ENCODE measurements at regions of chr3 and their contacts with region 1.

Region 1: DNA sequence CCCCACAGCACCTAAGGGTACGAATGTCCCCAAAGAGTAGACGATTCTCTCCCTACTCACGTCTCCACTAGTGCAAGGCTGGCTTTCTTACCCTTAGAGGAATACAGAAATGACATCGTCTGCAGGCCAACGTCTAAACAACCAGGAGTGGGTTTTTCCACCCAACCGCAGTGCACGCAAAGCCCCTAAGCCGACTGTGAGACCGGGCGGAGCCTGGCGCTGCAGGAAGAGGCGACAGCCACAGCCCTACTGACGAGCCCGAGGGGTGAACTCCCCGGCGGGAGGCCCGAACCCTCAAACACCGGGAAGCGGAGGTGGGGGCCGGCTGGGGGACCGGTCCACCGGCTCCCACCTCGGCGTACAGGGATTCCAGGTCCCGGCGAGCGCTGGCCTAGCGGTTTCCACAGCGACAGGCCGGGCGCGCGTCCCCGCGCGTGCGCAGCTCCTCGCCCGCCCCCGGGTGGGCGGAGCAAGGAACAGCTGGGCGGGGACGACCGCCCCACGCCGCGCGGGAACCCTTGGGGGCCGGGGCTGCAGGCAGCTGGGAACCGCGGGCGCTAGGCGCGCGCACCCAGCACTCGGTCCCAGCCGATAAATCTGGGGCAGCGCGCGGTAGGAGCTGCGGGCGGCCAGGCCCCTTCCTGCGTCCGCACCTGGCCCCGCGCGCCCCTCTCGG is at the starts of genes CEP19 and PIGX:
- DNase-seq: peak; percentile 87
- H3K4me3 ChIP-seq: peak within 1 kb of the TSS; percentile 86
- H3K27ac ChIP-seq: peak within 1 kb of the TSS; percentile 51
- H3K4me1 ChIP-seq: peaks cover 13% of the 10 kb centered on the region
- CTCF ChIP-seq: no peak
- total RNA-seq, gene CEP19: 1.9 and 3.3 TPM in 2 replicates
- total RNA-seq, gene PIGX: 24.1 and 24.9 TPM in 2 replicates

Region 2: DNA sequence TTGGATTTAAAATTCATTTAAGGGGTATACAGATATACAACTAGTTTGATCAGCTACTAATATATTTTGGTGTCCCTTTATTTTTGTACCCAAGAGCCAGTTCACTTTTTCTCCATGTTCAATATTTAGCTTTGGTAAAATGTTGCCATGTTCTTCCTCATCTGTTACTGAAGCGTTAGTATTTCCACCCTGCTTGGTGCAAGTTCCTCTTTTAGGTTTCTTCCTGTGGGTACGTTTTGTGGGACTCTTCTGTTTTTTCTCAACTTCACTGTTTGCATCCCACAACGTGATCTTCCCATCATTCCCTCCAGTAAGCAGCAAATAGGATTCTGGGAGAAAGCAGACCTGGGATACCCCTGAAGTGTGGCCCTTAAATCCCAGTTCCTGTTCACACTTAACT is 157.8 kb before region 1 on chr3:
- CTCF ChIA-PET with region 1: no interaction called
- POLR2A ChIA-PET with region 1: interaction called, 12 read pairs
- intact Hi-C with region 1: no loop called
- DNase-seq: peak; percentile 16
- H3K4me3 ChIP-seq: no peak overlapping the region
- H3K27ac ChIP-seq: no peak overlapping the region
- H3K4me1 ChIP-seq: peaks cover 4% of the 10 kb centered on the region
- CTCF ChIP-seq: no peak

Region 3: GRCh38 chr3:196677353-196677752 is 34.6 kb before region 1 on chr3:
- CTCF ChIA-PET with region 1: no interaction called
- POLR2A ChIA-PET with region 1: no interaction called
- intact Hi-C with region 1: no loop called
- DNase-seq: no peak
- H3K4me3 ChIP-seq: no peak overlapping the region
- H3K27ac ChIP-seq: no peak overlapping the region
- H3K4me1 ChIP-seq: no peaks in the 10 kb centered on the region
- CTCF ChIP-seq: no peak

Region 4: GRCh38 chr3:196739671-196740480 is 27.9 kb after region 1 on chr3 and contains the start of gene PAK2:
- CTCF ChIA-PET with region 1: no interaction called
- POLR2A ChIA-PET with region 1: interaction called, 5 read pairs
- intact Hi-C with region 1: loop called (anchors 2 kb)
- DNase-seq: peak; percentile 93
- H3K4me3 ChIP-seq: peak within 1 kb of the TSS; percentile 95
- H3K27ac ChIP-seq: peak within 1 kb of the TSS; percentile 85
- H3K4me1 ChIP-seq: peaks cover 11% of the 10 kb centered on the region
- CTCF ChIP-seq: no peak
- total RNA-seq, gene PAK2: 24.5 and 37.9 TPM in 2 replicates

Region 5: DNA sequence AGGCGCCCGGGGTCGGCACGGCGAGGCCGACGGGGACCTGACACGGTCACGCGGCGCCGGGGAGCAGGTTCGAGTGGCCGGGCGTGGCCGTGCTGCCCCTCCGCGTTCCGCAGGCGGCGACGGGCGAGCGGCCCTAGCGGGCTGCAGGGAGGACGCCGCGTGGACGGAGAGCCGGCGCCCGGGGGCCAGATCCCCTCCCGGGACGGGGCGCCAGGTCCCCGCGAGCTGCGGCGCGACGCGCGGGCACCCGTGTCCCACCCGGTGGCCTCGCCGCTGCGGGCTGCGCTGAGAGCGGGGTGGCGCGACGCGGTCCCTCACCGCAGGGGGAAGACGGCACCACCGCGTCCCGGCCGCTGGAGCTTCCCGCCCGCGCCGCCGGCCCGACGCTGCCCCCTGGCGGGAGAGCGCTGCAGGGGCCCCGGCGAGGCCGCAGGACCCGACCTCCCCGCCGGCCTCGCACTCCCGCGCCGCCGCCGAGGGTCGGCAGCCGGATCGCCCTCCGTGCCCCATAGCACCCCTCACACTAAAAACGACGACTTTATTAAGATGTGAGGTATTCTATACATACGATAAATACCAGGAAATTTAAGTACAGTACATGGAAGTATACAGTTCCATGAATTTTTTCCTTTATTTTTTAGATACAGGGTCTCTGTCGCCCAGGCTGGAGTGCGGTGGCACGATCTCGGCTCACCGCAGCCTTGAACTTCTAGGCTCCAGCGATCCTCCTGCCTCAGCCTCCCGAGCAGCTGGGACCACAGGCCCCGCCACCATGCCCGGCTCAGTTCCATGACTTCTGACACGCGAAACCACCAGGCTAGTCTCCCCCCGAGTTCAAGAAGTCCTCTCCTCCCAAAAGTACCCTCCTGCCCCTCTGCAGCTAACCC is 257.9 kb after region 1 on chr3:
- CTCF ChIA-PET with region 1: no interaction called
- POLR2A ChIA-PET with region 1: no interaction called
- intact Hi-C with region 1: loop called (anchors 10 kb)
- DNase-seq: peak; percentile 73
- H3K4me3 ChIP-seq: peak overlapping the region; percentile 72
- H3K27ac ChIP-seq: no peak overlapping the region
- H3K4me1 ChIP-seq: peaks cover 8% of the 10 kb centered on the region
- CTCF ChIP-seq: peak; percentile 77

Measured in OCI-LY7 (cell line).